Calu3 (cell line): ENCODE measurements at regions of chr5 and their contacts with region 1.

Region 1: DNA sequence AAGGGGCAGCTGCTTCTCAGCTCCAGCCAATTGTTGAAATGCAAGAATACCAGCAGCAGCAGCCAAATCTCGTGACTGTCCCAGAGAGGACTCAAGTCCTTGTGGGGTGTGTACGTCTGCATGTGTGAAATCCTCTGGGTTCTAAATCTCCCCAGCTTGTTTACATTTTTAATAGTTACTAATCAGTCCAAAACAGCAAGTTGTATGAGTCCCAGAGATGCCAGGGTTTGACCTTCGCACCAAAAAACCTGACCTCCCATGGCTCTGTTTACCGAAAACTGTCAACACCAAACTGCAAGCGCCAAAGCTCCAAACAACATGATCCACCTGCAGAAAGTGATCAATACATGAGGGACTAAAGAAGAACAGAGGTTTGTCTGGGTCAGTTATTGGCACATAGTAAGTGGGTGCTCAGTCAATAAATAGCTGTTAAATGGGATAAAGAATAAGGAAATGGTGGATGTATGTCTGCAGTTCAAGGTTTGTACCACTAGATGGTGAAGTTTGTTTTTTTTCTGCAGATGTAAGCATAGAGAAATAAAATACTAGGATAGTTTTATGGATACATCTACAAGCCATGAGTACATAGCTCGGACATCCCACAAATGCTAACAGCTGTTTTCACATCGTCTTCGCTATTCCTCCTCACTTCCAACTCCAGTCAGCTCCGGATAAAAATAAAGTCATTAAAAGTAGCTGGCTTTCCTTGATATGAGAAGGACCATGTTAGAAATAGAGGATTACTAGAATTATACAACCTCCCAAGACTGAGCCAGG is 85.3 kb upstream of the ADRB2 start:
- DNase-seq: peak; percentile 44
- H3K4me3 Mint-ChIP-seq: no peak overlapping the region
- H3K27ac Mint-ChIP-seq: no peak overlapping the region
- H3K4me1 Mint-ChIP-seq: peaks cover 58% of the 10 kb centered on the region
- H3K27me3 Mint-ChIP-seq: no peaks in the 10 kb centered on the region
- CTCF ChIP-seq: peak; percentile 65

Region 2: GRCh38 chr5:148805326-148806290 is 64.5 kb after region 1 on chr5:
- CTCF ChIA-PET with region 1: interaction called, 3 read pairs
- intact Hi-C with region 1: loop called (anchors 5 kb)
- DNase-seq: no peak
- H3K4me3 Mint-ChIP-seq: no peak overlapping the region
- H3K27ac Mint-ChIP-seq: no peak overlapping the region
- H3K4me1 Mint-ChIP-seq: peaks cover 44% of the 10 kb centered on the region
- H3K27me3 Mint-ChIP-seq: no peaks in the 10 kb centered on the region
- CTCF ChIP-seq: no peak

Region 3: DNA sequence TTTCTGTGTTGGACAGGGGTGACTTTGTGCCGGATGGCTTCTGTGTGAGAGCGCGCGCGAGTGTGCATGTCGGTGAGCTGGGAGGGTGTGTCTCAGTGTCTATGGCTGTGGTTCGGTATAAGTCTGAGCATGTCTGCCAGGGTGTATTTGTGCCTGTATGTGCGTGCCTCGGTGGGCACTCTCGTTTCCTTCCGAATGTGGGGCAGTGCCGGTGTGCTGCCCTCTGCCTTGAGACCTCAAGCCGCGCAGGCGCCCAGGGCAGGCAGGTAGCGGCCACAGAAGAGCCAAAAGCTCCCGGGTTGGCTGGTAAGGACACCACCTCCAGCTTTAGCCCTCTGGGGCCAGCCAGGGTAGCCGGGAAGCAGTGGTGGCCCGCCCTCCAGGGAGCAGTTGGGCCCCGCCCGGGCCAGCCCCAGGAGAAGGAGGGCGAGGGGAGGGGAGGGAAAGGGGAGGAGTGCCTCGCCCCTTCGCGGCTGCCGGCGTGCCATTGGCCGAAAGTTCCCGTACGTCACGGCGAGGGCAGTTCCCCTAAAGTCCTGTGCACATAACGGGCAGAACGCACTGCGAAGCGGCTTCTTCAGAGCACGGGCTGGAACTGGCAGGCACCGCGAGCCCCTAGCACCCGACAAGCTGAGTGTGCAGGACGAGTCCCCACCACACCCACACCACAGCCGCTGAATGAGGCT is 85.0 kb after region 1 on chr5 and contains the start of gene ADRB2:
- CTCF ChIA-PET with region 1: interaction called, 12 read pairs
- intact Hi-C with region 1: loop called (anchors 1 kb)
- DNase-seq: peak; percentile 99
- H3K4me3 Mint-ChIP-seq: peak within 1 kb of the TSS; percentile 88
- H3K27ac Mint-ChIP-seq: peak within 1 kb of the TSS; percentile 79
- H3K4me1 Mint-ChIP-seq: peaks cover 16% of the 10 kb centered on the region
- H3K27me3 Mint-ChIP-seq: no peaks in the 10 kb centered on the region
- CTCF ChIP-seq: no peak
- total RNA-seq, gene ADRB2: 16.6 and 16.9 TPM in 2 replicates

Region 4: GRCh38 chr5:148957591-148958202 is 216.5 kb after region 1 on chr5:
- CTCF ChIA-PET with region 1: interaction called, 47 read pairs
- intact Hi-C with region 1: loop called (anchors 2 kb)
- DNase-seq: peak; percentile 79
- H3K4me3 Mint-ChIP-seq: no peak overlapping the region
- H3K27ac Mint-ChIP-seq: no peak overlapping the region
- H3K4me1 Mint-ChIP-seq: peaks cover 68% of the 10 kb centered on the region
- H3K27me3 Mint-ChIP-seq: no peaks in the 10 kb centered on the region
- CTCF ChIP-seq: peak; percentile 93

Region 5: GRCh38 chr5:149035372-149035790 is 294.2 kb after region 1 on chr5:
- CTCF ChIA-PET with region 1: interaction called, 26 read pairs
- intact Hi-C with region 1: no loop called
- DNase-seq: peak; percentile 89
- H3K4me3 Mint-ChIP-seq: no peak overlapping the region
- H3K27ac Mint-ChIP-seq: peak overlapping the region; percentile 18
- H3K4me1 Mint-ChIP-seq: peaks cover 41% of the 10 kb centered on the region
- H3K27me3 Mint-ChIP-seq: no peaks in the 10 kb centered on the region
- CTCF ChIP-seq: peak; percentile 82

Region 6: DNA sequence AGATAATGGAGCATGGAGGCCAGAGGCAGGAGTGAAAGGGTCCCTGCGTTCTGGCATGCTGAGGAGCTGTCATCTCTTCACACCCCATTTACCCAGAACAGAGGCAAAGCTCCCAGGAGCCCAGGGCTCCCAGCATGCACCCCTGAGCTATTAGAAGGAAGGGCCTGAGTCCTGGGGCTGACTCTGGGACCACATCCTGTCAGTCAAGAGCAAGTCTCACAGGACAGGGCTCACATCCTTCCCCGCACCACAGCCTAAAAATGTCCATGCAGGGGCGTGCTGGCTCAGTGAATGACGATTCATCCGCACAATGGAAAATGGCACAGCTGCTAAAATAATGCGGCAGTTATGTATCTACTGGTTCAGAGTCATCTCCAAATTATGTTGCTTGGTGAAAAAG is 1517.0 kb after region 1 on chr5:
- CTCF ChIA-PET with region 1: no interaction called
- intact Hi-C with region 1: no loop called
- DNase-seq: no peak
- H3K4me3 Mint-ChIP-seq: no peak overlapping the region
- H3K27ac Mint-ChIP-seq: no peak overlapping the region
- H3K4me1 Mint-ChIP-seq: peaks cover 3% of the 10 kb centered on the region
- H3K27me3 Mint-ChIP-seq: peaks cover 25% of the 10 kb centered on the region
- CTCF ChIP-seq: no peak